ENCODE measurements at regions of chr22 and their contacts with region 1.

Region 1: DNA sequence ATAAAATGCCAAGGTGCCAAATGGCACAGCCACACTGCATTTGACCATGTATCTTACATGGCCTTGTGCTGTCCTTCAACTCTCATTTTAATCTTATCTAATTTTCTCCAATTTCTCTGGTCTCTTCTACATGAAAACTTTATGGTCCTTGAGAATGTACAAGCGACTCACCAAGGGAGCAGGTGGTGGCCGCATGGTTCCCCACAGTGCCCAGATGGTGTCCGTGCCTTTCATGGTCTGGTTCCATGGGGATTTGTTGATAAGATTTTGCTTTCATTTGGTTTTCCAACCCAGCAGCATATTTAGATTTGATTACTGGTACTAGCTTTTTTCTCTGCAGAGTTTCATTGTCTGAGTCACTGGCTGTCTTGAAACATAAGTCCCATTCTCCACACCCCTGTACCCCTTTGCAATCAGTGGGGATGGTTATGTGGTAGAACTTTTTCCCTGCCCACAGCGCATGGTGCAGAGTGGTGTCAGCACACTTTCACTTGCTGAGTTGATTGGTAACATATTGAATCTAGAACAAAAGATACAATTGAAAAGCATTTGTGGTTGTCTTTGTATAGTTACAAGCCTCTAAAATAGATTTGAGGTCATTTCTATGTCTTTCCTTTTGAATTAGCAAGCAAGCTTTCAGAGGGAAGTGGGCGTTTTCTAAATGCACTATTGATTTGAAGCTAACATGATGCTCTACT is 24.1 kb downstream of the ZNRF3 start:
- DNase-seq: peak; percentile 83
- H3K4me3 Mint-ChIP-seq: no peak overlapping the region
- H3K27ac Mint-ChIP-seq: peak overlapping the region; percentile 86
- H3K4me1 Mint-ChIP-seq: peaks cover 46% of the 10 kb centered on the region
- H3K27me3 Mint-ChIP-seq: peaks cover 27% of the 10 kb centered on the region

Region 2: DNA sequence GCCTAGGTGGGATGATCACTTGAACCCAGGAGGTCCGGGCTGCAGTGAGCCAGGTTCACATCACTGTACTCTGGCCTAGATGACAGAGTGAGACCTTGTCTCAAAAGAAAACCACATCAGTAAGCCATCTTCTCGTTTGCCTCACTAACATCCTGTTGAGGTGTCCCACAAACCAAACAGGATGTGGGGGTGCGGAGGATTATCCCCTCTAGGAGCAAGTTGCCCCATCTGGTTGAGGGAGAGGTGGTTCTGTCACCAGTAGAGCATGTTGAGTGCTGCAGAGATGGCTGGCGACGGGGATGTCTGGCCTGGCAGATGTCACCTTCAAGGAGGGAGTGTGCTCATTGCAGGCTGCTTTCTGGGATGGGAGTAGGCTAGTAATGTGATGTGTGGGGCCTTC is 48.4 kb after region 1 on chr22:
- CTCF ChIA-PET with region 1: no interaction called
- intact Hi-C with region 1: loop called (anchors 1 kb)
- DNase-seq: peak; percentile 95
- H3K4me3 Mint-ChIP-seq: no peak overlapping the region
- H3K27ac Mint-ChIP-seq: no peak overlapping the region
- H3K4me1 Mint-ChIP-seq: peaks cover 35% of the 10 kb centered on the region
- H3K27me3 Mint-ChIP-seq: peaks cover 76% of the 10 kb centered on the region

Region 3: GRCh38 chr22:29167032-29167911 is 259.8 kb after region 1 on chr22:
- CTCF ChIA-PET with region 1: no interaction called
- intact Hi-C with region 1: loop called (anchors 2 kb)
- DNase-seq: peak; percentile 88
- H3K4me3 Mint-ChIP-seq: no peak overlapping the region
- H3K27ac Mint-ChIP-seq: peak overlapping the region; percentile 61
- H3K4me1 Mint-ChIP-seq: peaks cover 17% of the 10 kb centered on the region
- H3K27me3 Mint-ChIP-seq: peaks cover 16% of the 10 kb centered on the region